ENCODE measurements at regions of chr11 and their contacts with region 1.

Region 1: GRCh38 chr11:73931039-73931645 is 19.7 kb upstream of the DNAJB13 start:
- DNase-seq: peak; percentile 50
- ATAC-seq: peak; percentile 72
- H3K4me3 ChIP-seq: no peak overlapping the region
- H3K27ac ChIP-seq: no peak overlapping the region
- H3K4me1 ChIP-seq: no peaks in the 10 kb centered on the region
- H3K27me3 ChIP-seq: no peaks in the 10 kb centered on the region; a peak in 1 of 5 replicates
- CTCF ChIP-seq: peak; percentile 65
- EP300 ChIP-seq: no peak
- POLR2A ChIP-seq: no peak
- RAD21 ChIP-seq: no peak; the same call in 1 of the 2 replicates

Region 2: GRCh38 chr11:73404048-73404447 is 527.1 kb before region 1 on chr11:
- CTCF ChIA-PET with region 1: no interaction called
- POLR2A ChIA-PET with region 1: no interaction called
- in situ Hi-C with region 1: no loop called
- intact Hi-C with region 1: loop called (anchors 5 kb)
- DNase-seq: peak; percentile 74
- ATAC-seq: peak; percentile 97
- H3K4me3 ChIP-seq: no peak overlapping the region
- H3K27ac ChIP-seq: no peak overlapping the region
- H3K4me1 ChIP-seq: peaks cover 8% of the 10 kb centered on the region
- H3K27me3 ChIP-seq: no peaks in the 10 kb centered on the region
- CTCF ChIP-seq: peak; percentile 91
- EP300 ChIP-seq: no peak
- POLR2A ChIP-seq: no peak
- RAD21 ChIP-seq: peak; percentile 83

Region 3: GRCh38 chr11:73414977-73415651 is 516.0 kb before region 1 on chr11:
- CTCF ChIA-PET with region 1: no interaction called
- POLR2A ChIA-PET with region 1: no interaction called
- in situ Hi-C with region 1: no loop called
- intact Hi-C with region 1: loop called (anchors 5 kb)
- DNase-seq: no peak
- ATAC-seq: no peak
- H3K4me3 ChIP-seq: no peak overlapping the region
- H3K27ac ChIP-seq: no peak overlapping the region
- H3K4me1 ChIP-seq: peaks cover 27% of the 10 kb centered on the region
- H3K27me3 ChIP-seq: no peaks in the 10 kb centered on the region
- CTCF ChIP-seq: no peak
- EP300 ChIP-seq: no peak
- POLR2A ChIP-seq: no peak
- RAD21 ChIP-seq: no peak

Region 4: GRCh38 chr11:73478738-73479347 is 452.3 kb before region 1 on chr11:
- CTCF ChIA-PET with region 1: no interaction called
- POLR2A ChIA-PET with region 1: no interaction called
- in situ Hi-C with region 1: no loop called
- intact Hi-C with region 1: loop called (anchors 5 kb)
- DNase-seq: peak; percentile 37
- ATAC-seq: peak; percentile 82
- H3K4me3 ChIP-seq: no peak overlapping the region
- H3K27ac ChIP-seq: no peak overlapping the region
- H3K4me1 ChIP-seq: peaks cover 8% of the 10 kb centered on the region
- H3K27me3 ChIP-seq: no peaks in the 10 kb centered on the region
- CTCF ChIP-seq: peak; percentile 74
- EP300 ChIP-seq: no peak
- POLR2A ChIP-seq: no peak
- RAD21 ChIP-seq: peak; percentile 50; the same call in 1 of the 2 replicates

Measured in HepG2 (cell line).